ENCODE measurements at regions of chr2 and their contacts with region 1.

Region 1: GRCh38 chr2:177332041-177332991 is 60.3 kb upstream of the AGPS start:
- DNase-seq: peak in 4 of 5 donors; percentile 35 to 58 (median 50)
- ATAC-seq: peak; percentile 48 to 88 (median 82)
- H3K4me3 ChIP-seq: peak overlapping the region in 6 of 12 donors; percentile 14 to 36 (median 24)
- H3K27ac ChIP-seq: peak overlapping the region in 4 of 12 donors; percentile 25 to 66 (median 34)
- H3K4me1 ChIP-seq: peaks cover 0 to 15% (median 4%) of the 10 kb centered on the region in 12 donors
- H3K27me3 ChIP-seq: no peaks in the 10 kb centered on the region
- CTCF ChIP-seq: peak; percentile 45 to 75 (median 68)
- POLR2A ChIP-seq: no peak

Region 2: GRCh38 chr2:177106212-177106611 is 226.1 kb before region 1 on chr2:
- intact Hi-C with region 1: no loop called
- DNase-seq: no peak
- ATAC-seq: no peak
- H3K4me3 ChIP-seq: no peak overlapping the region
- H3K27ac ChIP-seq: no peak overlapping the region
- H3K4me1 ChIP-seq: no peaks in the 10 kb centered on the region
- H3K27me3 ChIP-seq: peaks cover 0 to 11% (median 0%) of the 10 kb centered on the region in 9 donors
- CTCF ChIP-seq: no peak
- POLR2A ChIP-seq: no peak

Region 3: DNA sequence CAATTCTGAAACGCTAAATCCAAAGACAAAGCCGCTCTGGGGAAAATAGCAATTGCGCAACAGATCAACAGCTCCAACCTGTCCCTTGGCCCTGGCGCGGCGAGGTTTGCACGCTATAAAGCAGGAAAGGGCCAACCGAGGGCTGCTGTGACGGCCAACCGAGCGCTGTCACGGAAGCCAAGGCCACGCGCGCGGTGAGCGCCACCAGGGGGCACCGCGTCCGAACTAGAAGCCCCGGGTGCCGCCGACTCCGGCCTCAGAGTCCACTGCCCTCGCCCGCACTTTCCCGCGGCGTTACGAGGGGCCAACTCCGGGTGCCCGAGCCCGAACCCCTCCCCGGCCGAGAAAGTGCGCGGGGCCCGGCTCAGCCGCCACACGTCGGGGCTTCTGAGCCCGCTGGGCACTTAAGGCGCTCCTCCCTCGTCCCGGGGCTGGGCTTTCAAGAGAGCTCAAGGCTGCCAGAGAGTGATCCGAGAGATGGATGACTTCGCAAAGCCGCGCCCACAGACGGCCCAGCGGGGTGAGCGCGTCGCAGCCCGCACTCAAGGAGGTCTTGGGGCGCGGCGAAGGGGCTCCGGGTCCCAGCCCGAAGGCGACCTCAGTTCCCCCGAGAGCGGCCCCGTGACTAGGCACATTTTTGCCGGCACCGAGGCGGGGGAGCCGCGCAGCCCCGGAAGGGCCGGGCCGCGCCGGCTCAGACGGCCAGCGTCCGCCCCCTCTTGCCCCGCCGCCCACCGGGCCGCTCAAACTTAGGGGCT is 68.7 kb before region 1 on chr2:
- intact Hi-C with region 1: loop called (anchors 2 to 5 kb)
- DNase-seq: peak; percentile 98 to 99 (median 99)
- ATAC-seq: peak; percentile 74 to 85 (median 79)
- H3K4me3 ChIP-seq: peak overlapping the region; percentile 72 to 97 (median 90)
- H3K27ac ChIP-seq: peak overlapping the region; percentile 97 to 100 (median 99)
- H3K4me1 ChIP-seq: peaks cover 0 to 57% (median 43%) of the 10 kb centered on the region in 12 donors
- H3K27me3 ChIP-seq: no peaks in the 10 kb centered on the region
- CTCF ChIP-seq: peak; percentile 73 to 96 (median 87)
- POLR2A ChIP-seq: peak in 1 of 2 donors; percentile 58

Region 4: DNA sequence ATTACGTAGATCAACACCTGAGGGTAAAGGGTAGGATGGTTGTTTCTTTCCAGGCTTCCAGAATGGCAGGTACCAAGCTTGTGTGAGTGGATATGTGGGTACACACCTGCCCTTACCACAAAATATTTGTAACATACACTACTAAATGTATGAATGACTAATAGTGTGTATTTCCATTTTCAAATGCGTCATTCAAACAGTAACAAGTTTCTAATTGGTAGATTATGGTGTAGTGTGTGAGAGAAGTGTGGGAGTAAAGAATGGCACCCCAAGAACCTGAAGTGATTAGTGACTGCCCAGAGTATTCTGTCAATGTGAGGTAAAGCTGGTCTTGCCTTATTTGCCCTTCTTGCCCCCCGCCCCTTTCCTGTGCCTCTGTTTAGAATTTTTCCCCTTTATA is 81.4 kb after region 1 on chr2:
- intact Hi-C with region 1: loop called in 9 of 10 experiments (anchors 1 to 5 kb)
- DNase-seq: no peak
- ATAC-seq: no peak
- H3K4me3 ChIP-seq: no peak overlapping the region
- H3K27ac ChIP-seq: no peak overlapping the region
- H3K4me1 ChIP-seq: peaks cover 0 to 37% (median 2%) of the 10 kb centered on the region in 12 donors
- H3K27me3 ChIP-seq: no peaks in the 10 kb centered on the region
- CTCF ChIP-seq: no peak
- POLR2A ChIP-seq: no peak

Region 5: DNA sequence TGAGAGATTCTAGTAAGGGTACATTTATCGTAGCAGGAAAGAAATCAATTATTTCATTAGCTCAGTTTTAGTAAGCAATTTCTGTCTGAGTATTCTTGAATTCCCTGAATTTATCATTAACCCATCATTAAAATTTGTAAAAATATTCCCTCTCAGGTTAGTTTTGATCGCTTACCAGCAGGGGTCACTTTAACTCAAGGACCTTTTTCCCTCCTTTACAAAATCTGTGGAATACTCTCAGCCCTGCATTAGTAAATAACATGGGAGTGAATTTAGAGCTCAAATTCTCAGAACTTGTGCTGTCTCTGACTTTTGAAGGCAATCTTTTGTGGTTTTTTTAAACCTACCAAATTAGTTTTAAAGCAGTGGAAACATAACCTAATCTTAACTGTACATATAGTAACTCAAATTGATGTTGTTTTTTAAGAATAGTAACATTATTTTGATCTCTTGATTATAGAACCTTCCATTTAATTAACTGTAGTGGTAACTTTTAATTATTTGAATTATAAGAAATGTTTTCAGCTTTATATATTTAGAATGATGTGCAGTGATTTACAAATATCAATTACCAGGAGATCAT is 157.5 kb after region 1 on chr2:
- intact Hi-C with region 1: loop called in 1 of 10 experiments (anchors 10 kb)
- DNase-seq: no peak
- ATAC-seq: no peak
- H3K4me3 ChIP-seq: no peak overlapping the region
- H3K27ac ChIP-seq: no peak overlapping the region
- H3K4me1 ChIP-seq: peaks cover 0 to 3% (median 0%) of the 10 kb centered on the region in 12 donors
- H3K27me3 ChIP-seq: no peaks in the 10 kb centered on the region
- CTCF ChIP-seq: peak; percentile 33 to 71 (median 60)
- POLR2A ChIP-seq: no peak

Region 6: DNA sequence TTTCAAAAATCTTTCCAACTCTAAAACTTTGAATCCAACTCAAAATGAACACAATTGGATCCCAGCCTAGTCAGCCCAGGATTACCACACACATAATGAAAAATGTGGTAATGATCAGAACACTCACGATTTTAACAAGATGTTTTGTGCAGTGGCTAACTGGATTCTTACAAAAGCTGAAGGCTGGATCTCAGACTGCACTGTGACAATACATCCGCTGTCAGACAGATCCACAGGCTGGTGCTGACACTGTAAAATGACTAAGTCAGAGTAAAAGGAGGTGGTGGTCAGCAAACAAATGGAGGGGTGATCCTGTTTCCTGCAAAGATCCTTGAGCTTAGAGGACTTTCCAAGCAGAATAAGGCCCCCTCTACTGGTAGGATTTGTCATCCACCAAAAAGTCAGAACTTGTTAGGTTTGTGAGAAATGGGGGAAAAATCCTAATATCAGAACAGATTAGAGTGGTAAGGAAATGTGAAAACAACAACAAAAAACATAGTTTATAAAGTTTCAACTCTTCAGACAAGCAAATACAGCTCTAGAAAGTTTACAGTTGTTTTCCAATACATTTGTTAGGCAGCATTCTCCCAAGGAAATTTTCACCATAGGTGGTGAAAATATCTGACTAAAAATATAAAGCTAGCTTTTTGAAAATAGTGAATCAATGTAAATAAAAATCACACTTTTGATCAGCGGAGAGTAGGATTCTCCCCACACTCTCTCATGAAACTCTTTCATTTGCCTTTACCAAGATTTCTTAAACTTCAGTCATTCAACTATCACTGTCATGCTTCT is 272.2 kb after region 1 on chr2:
- intact Hi-C with region 1: loop called in 9 of 10 experiments (anchors 5 to 10 kb)
- DNase-seq: peak in 1 of 5 donors; percentile 13
- ATAC-seq: peak in 3 of 4 donors; percentile 39 to 78 (median 52)
- H3K4me3 ChIP-seq: peak overlapping the region in 1 of 12 donors; percentile 9
- H3K27ac ChIP-seq: peak overlapping the region in 5 of 12 donors; percentile 1 to 22 (median 10)
- H3K4me1 ChIP-seq: peaks cover 0 to 7% (median under 1%) of the 10 kb centered on the region in 12 donors
- H3K27me3 ChIP-seq: no peaks in the 10 kb centered on the region
- CTCF ChIP-seq: peak; percentile 47 to 76 (median 64)
- POLR2A ChIP-seq: no peak

Region 7: DNA sequence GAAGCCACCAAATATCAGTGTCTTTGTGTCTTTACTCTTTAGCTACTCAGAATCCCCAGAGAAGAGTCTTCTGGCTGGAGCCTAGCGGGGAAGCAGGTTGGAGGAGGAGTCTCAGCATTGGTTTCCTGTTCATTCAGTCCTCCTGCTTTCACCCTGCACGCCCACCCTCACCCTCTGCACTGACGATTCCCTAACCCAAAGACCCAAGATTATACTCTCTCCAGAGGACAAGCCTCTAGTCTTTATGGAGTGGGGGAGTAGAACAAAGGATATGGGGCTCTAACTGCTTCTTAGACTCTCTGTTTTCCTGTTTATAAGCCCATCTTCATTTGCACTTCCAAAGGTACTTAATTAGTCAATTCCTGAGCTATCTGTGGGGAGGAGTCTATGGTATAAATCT is 399.1 kb after region 1 on chr2:
- intact Hi-C with region 1: loop called in 5 of 10 experiments (anchors 5 to 10 kb)
- DNase-seq: no peak
- ATAC-seq: no peak
- H3K4me3 ChIP-seq: no peak overlapping the region
- H3K27ac ChIP-seq: no peak overlapping the region
- H3K4me1 ChIP-seq: no peaks in the 10 kb centered on the region
- H3K27me3 ChIP-seq: peaks cover 0 to 7% (median 0%) of the 10 kb centered on the region in 9 donors
- CTCF ChIP-seq: no peak
- POLR2A ChIP-seq: no peak

Measured in heart left ventricle (tissue), 16 donors.